ENCODE measurements at regions of chr3 and their contacts with region 1.

Region 1: GRCh38 chr3:55180936-55181535 is 253.2 kb upstream of the LRTM1 start:
- DNase-seq: peak in 1 of 2 experiments; percentile 42
- H3K4me3 ChIP-seq: no peak overlapping the region
- H3K4me3 Mint-ChIP-seq: no peak overlapping the region
- H3K27ac Mint-ChIP-seq: no peak overlapping the region
- H3K4me1 ChIP-seq: no peaks in the 10 kb centered on the region
- H3K4me1 Mint-ChIP-seq: no peaks in the 10 kb centered on the region
- H3K27me3 ChIP-seq: no peaks in the 10 kb centered on the region
- H3K27me3 Mint-ChIP-seq: peaks cover 10% of the 10 kb centered on the region
- CTCF ChIP-seq: peak; percentile 44 to 74

Region 2: DNA sequence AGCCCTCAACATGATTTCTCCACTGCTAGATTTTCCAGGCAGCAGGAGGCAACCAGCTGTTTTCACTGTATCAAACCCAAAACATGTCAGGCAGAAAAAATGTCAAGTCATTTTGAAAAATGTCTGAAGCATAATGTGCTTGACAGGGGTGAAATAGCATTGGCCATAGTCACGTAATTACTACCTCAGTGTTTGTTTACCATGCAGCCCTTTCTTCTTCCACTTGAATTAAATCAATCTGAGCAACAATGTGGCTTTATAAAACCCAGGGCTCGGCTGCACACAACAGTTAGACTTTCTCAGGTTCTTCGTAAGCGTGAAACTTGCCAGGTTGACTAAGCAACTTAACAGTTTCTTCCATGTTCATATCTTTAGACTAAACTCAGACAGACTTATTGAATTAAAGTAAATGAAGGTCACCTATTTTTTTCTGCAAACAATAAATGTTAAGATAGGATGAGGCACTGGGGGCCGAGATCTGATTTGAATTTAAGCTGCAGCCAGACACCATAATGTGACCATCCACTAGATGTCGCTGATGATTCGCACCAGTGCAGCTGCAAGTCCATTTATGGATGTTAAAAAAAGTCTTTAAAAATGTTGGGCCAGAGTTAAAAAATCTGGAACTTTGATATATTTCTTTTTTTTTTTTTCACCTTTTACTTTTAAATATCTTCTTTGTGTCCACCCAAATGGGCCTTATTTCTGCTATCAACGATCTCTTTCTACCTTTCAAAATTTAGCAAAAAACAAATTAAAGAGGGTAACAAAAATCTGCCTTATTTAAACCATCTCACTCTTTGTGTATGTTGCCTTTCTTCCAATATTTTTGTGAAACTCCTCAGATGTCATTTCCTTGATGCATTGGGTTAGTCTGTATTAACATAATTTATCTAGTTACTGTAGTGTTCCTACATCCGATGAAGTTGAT is 752.8 kb before region 1 on chr3:
- CTCF ChIA-PET with region 1: no interaction called
- POLR2A ChIA-PET with region 1: no interaction called
- intact Hi-C with region 1: loop called (anchors 2 kb)
- DNase-seq: peak; percentile 55 to 66
- H3K4me3 ChIP-seq: no peak overlapping the region
- H3K4me3 Mint-ChIP-seq: no peak overlapping the region
- H3K27ac Mint-ChIP-seq: no peak overlapping the region
- H3K4me1 ChIP-seq: no peaks in the 10 kb centered on the region
- H3K4me1 Mint-ChIP-seq: no peaks in the 10 kb centered on the region
- H3K27me3 ChIP-seq: no peaks in the 10 kb centered on the region
- H3K27me3 Mint-ChIP-seq: peaks cover 7% of the 10 kb centered on the region
- CTCF ChIP-seq: peak; percentile 67 to 81

Region 3: DNA sequence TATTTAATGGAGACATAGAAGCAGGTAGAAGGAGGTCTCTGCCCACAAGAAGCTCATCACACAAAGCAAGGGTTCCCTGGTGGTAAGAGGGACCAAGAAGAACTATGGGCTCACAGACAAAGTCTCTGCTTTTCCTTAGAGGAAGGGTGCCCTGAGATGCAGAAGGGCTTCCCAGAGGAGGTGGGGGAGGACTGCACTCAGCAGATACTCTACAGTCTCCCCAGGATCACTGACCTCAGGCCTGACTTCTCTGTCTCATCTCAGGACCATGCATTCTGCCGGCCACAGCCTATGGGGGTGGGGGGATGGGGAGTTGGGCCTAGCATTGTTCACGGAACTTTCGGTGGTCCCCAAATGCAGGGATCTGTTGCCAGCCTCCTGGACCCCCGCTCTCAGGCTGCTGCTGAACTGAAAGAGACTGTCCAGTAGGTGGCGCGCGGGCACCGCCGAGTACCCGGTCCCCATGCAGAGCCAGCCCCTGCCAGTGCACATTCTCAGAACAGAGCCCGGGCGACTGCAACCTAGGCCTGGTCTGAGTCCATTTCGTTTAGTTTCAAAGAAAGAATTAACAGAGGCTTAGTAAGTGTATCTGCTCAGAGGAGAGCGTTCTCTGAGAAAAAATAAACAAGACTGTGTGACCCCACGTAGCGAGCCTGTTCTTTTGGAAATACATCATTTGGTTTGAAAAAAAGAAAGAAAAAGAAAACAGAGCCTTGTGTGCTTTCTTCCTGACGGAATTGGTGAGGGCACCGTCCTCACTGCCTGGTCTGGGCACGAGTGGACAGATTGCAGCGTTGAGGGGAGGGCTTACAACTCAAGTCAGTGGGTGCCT is 327.2 kb before region 1 on chr3:
- CTCF ChIA-PET with region 1: no interaction called
- POLR2A ChIA-PET with region 1: no interaction called
- intact Hi-C with region 1: loop called (anchors 2 kb)
- DNase-seq: peak; percentile 64 to 75
- H3K4me3 ChIP-seq: no peak overlapping the region
- H3K4me3 Mint-ChIP-seq: no peak overlapping the region
- H3K27ac Mint-ChIP-seq: no peak overlapping the region
- H3K4me1 ChIP-seq: no peaks in the 10 kb centered on the region
- H3K4me1 Mint-ChIP-seq: no peaks in the 10 kb centered on the region
- H3K27me3 ChIP-seq: no peaks in the 10 kb centered on the region; the same call in 1 of the 2 replicates
- H3K27me3 Mint-ChIP-seq: peaks cover 14% of the 10 kb centered on the region
- CTCF ChIP-seq: peak; percentile 82 to 88

Region 4: DNA sequence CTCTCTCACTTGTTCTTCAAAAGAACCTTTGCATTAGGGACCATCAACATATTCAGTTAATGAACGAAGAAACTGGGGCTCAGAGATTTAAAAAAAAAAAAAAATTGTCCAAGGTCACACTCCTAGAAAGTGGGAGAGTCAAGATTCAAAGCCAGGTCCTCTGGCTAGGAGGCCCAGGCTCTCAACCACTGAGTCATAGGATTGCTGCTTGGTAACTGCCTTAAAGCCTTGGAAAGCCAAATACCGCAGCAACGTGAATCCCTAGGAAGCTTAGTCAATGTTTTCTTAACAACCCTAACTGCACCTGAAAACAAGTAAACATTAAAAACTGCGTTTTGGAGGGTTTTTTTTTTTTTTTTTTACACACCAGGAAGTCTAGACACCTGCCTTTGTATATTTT is 149.3 kb after region 1 on chr3:
- CTCF ChIA-PET with region 1: no interaction called
- POLR2A ChIA-PET with region 1: no interaction called
- intact Hi-C with region 1: no loop called
- DNase-seq: no peak
- H3K4me3 ChIP-seq: no peak overlapping the region
- H3K4me3 Mint-ChIP-seq: no peak overlapping the region
- H3K27ac Mint-ChIP-seq: no peak overlapping the region
- H3K4me1 ChIP-seq: no peaks in the 10 kb centered on the region
- H3K4me1 Mint-ChIP-seq: no peaks in the 10 kb centered on the region
- H3K27me3 ChIP-seq: no peaks in the 10 kb centered on the region
- H3K27me3 Mint-ChIP-seq: peaks cover 10% of the 10 kb centered on the region
- CTCF ChIP-seq: no peak

Measured in Caco-2 (cell line).